H1 (cell line): ENCODE measurements at regions of chr11 and their contacts with region 1.

Region 1: DNA sequence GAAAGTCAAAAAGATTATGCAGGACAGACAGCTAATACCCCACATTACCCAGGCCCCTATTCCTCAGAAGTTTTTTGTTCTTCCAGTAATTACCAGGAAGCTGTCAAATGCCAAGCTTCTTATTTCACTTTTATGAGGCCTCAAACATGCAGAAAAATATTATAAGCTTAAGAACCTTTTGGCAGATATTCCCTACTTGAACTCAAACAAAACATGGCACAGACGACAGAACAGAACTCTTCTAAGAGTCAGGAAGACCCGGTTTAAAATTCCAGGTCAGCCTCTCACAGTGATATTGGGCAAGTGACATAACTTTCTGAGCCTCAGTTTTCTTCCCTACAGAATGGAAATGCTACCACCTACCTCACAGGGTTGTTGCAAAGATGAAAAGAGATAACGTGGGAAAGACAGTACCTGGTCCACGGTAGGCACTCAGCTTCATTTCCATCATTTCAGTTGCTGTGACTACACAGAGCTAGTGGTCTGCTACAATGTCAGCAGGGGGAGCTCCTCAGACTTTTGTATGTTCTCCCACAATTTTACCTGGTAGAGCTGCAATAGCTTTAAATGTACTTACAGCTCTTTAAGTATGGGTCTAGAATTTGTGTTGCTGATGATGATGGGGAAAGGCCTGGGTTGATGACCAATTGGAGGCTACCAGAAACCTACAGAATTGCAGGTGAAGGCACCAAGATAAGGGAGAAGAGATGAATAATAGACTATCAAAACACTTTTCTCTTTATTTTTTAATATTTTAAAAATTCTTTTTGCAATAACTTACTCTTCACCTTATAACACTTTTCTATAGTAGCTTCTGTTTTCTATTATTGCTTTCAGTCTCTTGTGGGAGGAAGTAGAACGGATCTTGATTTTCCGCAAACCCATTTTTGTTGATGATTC is 98.3 kb upstream of the CHRM4 start:
- DNase-seq: peak in 1 of 2 experiments; percentile 9
- H3K4me3 ChIP-seq: no peak overlapping the region
- H3K27ac ChIP-seq: no peak overlapping the region
- H3K4me1 ChIP-seq: no peaks in the 10 kb centered on the region
- H3K27me3 ChIP-seq: no peaks in the 10 kb centered on the region
- CTCF ChIP-seq: peak; percentile 13 to 77 (median 67)
- EP300 ChIP-seq: no peak
- POLR2A ChIP-seq: no peak
- RAD21 ChIP-seq: peak; percentile 51 to 68

Region 2: DNA sequence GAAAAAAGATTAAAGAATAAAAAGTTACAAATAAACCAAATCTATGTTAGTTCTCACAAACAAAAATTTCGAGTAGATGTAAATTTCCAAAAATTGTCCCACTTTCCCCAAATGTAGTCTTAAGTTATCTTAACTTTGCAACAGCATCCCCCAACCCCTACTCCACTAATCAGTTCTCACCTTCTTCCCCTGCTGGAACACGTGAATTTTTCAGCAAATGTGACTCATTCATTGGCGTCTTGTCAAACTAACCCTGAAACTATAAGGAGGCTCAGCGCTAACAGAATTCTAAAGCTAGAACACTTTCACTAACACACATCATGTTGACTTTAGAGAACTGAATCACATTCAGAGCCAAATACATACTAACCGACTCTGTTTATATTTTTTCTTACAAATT is 414.7 kb before region 1 on chr11:
- CTCF ChIA-PET with region 1: no interaction called
- POLR2A ChIA-PET with region 1: no interaction called
- DNase-seq: no peak
- H3K4me3 ChIP-seq: no peak overlapping the region
- H3K27ac ChIP-seq: no peak overlapping the region
- H3K4me1 ChIP-seq: 0 out of 7 replicates have a peak, but pooled peaks cover 0 to 3% (median 0%) of the 10 kb centered on the region in 4 experiments
- H3K27me3 ChIP-seq: no peaks in the 10 kb centered on the region
- CTCF ChIP-seq: no peak
- EP300 ChIP-seq: no peak
- POLR2A ChIP-seq: no peak
- RAD21 ChIP-seq: no peak

Region 3: DNA sequence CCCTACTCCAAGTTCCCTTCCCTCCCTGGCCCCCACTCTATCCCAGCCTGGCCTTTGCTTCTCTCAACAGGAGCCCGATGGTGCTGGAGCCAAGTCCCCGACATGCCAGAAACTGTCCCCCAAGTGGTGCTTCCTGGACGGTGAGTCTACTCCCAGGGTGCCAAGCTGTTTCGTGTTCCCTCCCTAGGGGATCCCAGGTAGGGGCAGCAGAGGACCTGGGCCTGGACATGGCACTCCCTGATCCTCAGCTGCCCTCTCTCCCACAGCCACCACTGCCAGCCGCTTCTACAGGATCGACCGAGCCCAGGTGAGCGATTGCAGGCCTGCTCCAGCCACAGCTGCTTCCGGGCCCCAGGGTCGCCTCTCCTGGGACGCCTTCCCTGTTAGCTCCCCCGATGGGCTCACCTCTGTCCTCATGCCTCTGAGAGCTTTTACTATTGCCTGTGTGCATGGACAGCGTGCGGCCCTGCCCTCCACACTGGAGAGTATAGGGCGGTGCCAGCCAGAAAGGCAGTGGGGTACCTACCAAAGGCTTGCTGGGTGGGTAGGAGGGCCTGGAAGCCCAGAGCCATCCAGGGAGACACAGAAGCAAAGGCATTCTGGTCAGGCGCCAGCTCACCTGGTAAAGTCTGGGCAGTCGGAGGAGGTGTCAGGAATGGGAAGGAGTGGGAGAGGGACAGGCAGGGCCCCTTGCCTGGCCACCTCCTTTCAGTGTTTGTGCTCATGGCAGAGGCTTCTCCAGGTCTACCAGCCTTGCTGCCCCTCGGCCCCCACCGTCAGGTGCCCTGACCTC is 113.5 kb before region 1 on chr11:
- CTCF ChIA-PET with region 1: no interaction called
- POLR2A ChIA-PET with region 1: no interaction called
- DNase-seq: no peak
- H3K4me3 ChIP-seq: no peak overlapping the region
- H3K27ac ChIP-seq: no peak overlapping the region
- H3K4me1 ChIP-seq: peaks cover 0 to 10% (median 8%) of the 10 kb centered on the region in 4 experiments; a peak in 6 of 7 replicates
- H3K27me3 ChIP-seq: no peaks in the 10 kb centered on the region
- CTCF ChIP-seq: no peak
- EP300 ChIP-seq: no peak
- POLR2A ChIP-seq: no peak
- RAD21 ChIP-seq: no peak

Region 4: DNA sequence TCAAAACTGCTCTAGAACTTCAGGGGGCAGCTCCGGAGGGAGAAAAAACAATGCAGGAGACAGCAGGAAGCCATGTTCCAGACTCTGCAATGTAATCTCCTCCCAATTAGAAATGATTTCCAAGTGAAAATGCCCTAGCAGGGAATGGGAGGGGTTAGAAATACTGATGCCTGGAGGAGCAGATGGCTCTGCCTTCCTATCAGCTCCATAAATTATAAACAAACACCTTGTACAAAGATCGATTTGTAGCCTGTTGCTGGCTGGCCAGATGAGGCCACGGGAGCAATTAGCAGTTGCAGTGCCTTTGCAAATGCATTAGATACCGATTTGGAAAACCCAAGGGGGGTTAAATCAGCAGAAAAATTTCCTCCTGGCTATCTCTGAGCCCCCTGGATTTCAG is 51.7 kb before region 1 on chr11:
- CTCF ChIA-PET with region 1: interaction called, 12 read pairs
- POLR2A ChIA-PET with region 1: no interaction called
- DNase-seq: no peak
- H3K4me3 ChIP-seq: no peak overlapping the region
- H3K27ac ChIP-seq: no peak overlapping the region
- H3K4me1 ChIP-seq: peaks cover 7 to 15% (median 11%) of the 10 kb centered on the region in 4 experiments
- H3K27me3 ChIP-seq: no peaks in the 10 kb centered on the region
- CTCF ChIP-seq: no peak
- EP300 ChIP-seq: no peak
- POLR2A ChIP-seq: no peak
- RAD21 ChIP-seq: no peak

Region 5: GRCh38 chr11:46475926-46476545 is 13.9 kb before region 1 on chr11:
- CTCF ChIA-PET with region 1: interaction called, 33 read pairs
- POLR2A ChIA-PET with region 1: interaction called, 3 read pairs
- DNase-seq: no peak
- H3K4me3 ChIP-seq: no peak overlapping the region
- H3K27ac ChIP-seq: no peak overlapping the region
- H3K4me1 ChIP-seq: no peaks in the 10 kb centered on the region
- H3K27me3 ChIP-seq: no peaks in the 10 kb centered on the region
- CTCF ChIP-seq: no peak
- EP300 ChIP-seq: no peak
- POLR2A ChIP-seq: no peak
- RAD21 ChIP-seq: no peak

Region 6: GRCh38 chr11:46520971-46521745 is 31.2 kb after region 1 on chr11:
- CTCF ChIA-PET with region 1: interaction called, 50 read pairs
- POLR2A ChIA-PET with region 1: no interaction called
- DNase-seq: no peak
- H3K4me3 ChIP-seq: no peak overlapping the region
- H3K27ac ChIP-seq: no peak overlapping the region
- H3K4me1 ChIP-seq: peaks cover 0 to 10% (median 6%) of the 10 kb centered on the region in 4 experiments; a peak in 3 of 7 replicates
- H3K27me3 ChIP-seq: no peaks in the 10 kb centered on the region
- CTCF ChIP-seq: no peak
- EP300 ChIP-seq: no peak
- POLR2A ChIP-seq: no peak
- RAD21 ChIP-seq: no peak

Region 7: DNA sequence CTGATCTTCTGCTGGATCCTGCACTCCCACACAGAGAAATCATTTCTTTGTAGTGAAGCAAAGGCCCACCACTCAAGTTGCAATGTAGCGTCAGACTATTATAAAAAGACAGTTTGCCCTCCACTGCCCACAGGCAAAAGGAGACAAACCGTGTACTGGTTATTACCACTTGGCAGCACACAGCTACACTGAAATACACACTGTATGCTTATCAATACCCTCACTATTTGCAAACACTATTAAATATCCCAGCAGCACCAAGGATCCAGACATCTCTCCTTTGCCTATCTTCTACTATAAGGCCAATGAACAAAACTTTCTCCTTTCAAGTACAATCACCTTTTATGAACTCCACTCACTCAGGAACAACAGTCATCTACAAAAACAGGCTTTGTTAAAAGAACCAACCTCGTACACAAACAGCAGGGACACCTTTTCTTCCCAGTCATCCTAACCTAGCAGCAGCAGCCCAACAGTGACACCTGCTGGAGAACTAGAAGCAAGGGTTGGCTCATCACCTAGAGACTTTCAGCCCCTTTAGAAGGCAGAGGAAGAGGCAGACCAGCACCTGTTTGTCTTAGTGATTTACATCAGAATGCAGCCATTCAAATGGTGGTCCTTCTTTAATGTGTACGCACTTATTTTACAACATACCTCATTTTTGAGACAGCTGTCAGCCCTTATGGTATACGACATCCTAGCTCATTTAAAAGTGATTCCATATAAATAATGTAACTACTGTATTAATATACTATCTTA is 47.8 kb after region 1 on chr11:
- CTCF ChIA-PET with region 1: interaction called, 35 read pairs
- POLR2A ChIA-PET with region 1: interaction called, 3 read pairs
- DNase-seq: peak; percentile 78 to 79
- H3K4me3 ChIP-seq: peak overlapping the region in 1 of 4 experiments; percentile 14; a peak in 2 of 8 replicates
- H3K27ac ChIP-seq: no peak overlapping the region
- H3K4me1 ChIP-seq: peaks cover 0 to 5% (median 5%) of the 10 kb centered on the region in 4 experiments; a peak in 6 of 7 replicates
- H3K27me3 ChIP-seq: no peaks in the 10 kb centered on the region
- CTCF ChIP-seq: peak; percentile 71 to 99 (median 93)
- EP300 ChIP-seq: peak in 1 of 2 experiments; percentile 61; a peak in 1 of 3 replicates
- POLR2A ChIP-seq: no peak
- RAD21 ChIP-seq: peak; percentile 95 to 96

Region 8: DNA sequence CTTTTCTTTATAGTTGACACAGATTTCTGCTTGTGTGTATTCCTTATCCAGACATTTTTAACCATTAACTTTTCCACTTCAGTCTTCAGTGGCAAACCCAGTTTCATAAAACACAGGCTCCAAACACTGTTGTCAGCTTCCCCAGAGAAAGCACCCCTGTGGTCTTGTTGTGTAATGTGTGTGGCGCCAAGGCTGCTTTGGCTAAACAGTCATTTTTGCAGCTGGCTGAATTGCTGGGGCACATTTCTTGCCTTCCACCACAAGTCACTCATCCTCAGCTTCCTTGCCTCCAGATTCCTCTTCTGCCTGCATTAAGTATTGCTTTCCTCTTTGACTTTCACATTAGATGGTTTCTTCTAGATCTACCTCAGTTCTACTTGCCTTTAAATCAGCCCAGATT is 170.0 kb after region 1 on chr11:
- CTCF ChIA-PET with region 1: no interaction called
- POLR2A ChIA-PET with region 1: no interaction called
- DNase-seq: no peak
- H3K4me3 ChIP-seq: no peak overlapping the region
- H3K27ac ChIP-seq: no peak overlapping the region
- H3K4me1 ChIP-seq: no peaks in the 10 kb centered on the region
- H3K27me3 ChIP-seq: no peaks in the 10 kb centered on the region
- CTCF ChIP-seq: no peak
- EP300 ChIP-seq: no peak
- POLR2A ChIP-seq: no peak
- RAD21 ChIP-seq: no peak

Region 9: DNA sequence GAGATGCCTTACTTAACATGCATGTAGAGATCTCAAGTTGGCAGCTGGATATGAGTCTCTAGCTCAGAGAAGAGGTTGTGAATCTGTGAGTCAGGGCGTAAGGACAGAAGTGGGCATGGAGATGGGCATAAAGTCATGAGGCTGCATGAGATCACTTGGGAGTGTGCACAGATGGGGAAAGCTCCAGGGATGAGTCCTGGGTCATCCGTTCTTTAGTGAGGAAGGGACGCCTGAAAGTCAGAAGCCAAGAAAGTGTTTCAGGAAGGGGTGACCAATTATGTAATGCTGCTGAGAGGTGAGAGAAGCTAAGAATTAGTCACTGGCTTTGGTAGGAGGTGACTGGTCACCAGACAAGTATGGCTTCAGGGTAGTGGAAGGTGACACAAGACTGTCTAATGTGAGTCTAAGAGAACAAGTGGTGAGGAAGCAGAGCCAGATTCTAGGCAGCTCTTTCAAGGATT is 752.0 kb after region 1 on chr11:
- CTCF ChIA-PET with region 1: no interaction called
- POLR2A ChIA-PET with region 1: no interaction called
- DNase-seq: no peak
- H3K4me3 ChIP-seq: no peak overlapping the region
- H3K27ac ChIP-seq: no peak overlapping the region
- H3K4me1 ChIP-seq: no peaks in the 10 kb centered on the region
- H3K27me3 ChIP-seq: no peaks in the 10 kb centered on the region
- CTCF ChIP-seq: no peak
- EP300 ChIP-seq: no peak
- POLR2A ChIP-seq: peak in 1 of 2 experiments; percentile 49; a peak in 2 of 3 replicates
- RAD21 ChIP-seq: no peak